Activated CD4-positive, alpha-beta memory T cell treated with anti-CD3 and anti-CD28 coated beads for 36 hours (primary cell): ENCODE measurements at regions of chr11 and their contacts with region 1.

Region 1: GRCh38 chr11:117946842-117947526 is 17.8 kb upstream of the TMPRSS13 start:
- DNase-seq: peak; percentile 91
- H3K4me3 Mint-ChIP-seq: no peak overlapping the region
- H3K27ac Mint-ChIP-seq: peak overlapping the region; percentile 65
- H3K4me1 Mint-ChIP-seq: peaks cover 77% of the 10 kb centered on the region
- H3K27me3 Mint-ChIP-seq: no peaks in the 10 kb centered on the region

Region 2: GRCh38 chr11:117426269-117426685 is 520.7 kb before region 1 on chr11:
- CTCF ChIA-PET with region 1: interaction called, 10 read pairs
- POLR2A ChIA-PET with region 1: no interaction called
- intact Hi-C with region 1: no loop called
- DNase-seq: peak; percentile 80
- H3K4me3 Mint-ChIP-seq: no peak overlapping the region
- H3K27ac Mint-ChIP-seq: no peak overlapping the region
- H3K4me1 Mint-ChIP-seq: peaks cover 4% of the 10 kb centered on the region
- H3K27me3 Mint-ChIP-seq: no peaks in the 10 kb centered on the region

Region 3: DNA sequence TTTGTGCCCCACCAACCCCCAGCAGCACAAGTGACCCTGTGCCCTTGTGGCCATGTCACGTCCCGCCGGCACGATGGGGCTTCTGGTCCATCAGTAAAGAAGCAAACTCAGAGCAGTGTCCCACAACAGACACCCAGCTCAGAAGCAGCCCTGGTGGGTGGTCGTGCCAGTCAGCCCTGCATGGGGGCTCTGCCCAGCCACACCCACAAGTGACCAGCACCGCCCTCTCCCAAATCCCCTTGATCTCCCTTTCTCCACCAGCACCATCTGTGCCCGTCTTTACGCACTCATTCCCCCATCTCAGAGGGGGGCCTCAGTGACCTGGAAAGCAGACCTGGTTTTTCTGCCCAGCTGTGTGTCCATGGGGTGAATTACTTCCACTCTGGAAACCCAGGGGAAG is 299.1 kb before region 1 on chr11:
- CTCF ChIA-PET with region 1: no interaction called
- POLR2A ChIA-PET with region 1: no interaction called
- intact Hi-C with region 1: no loop called
- DNase-seq: no peak
- H3K4me3 Mint-ChIP-seq: no peak overlapping the region
- H3K27ac Mint-ChIP-seq: no peak overlapping the region
- H3K4me1 Mint-ChIP-seq: no peaks in the 10 kb centered on the region
- H3K27me3 Mint-ChIP-seq: peaks cover 4% of the 10 kb centered on the region

Region 4: DNA sequence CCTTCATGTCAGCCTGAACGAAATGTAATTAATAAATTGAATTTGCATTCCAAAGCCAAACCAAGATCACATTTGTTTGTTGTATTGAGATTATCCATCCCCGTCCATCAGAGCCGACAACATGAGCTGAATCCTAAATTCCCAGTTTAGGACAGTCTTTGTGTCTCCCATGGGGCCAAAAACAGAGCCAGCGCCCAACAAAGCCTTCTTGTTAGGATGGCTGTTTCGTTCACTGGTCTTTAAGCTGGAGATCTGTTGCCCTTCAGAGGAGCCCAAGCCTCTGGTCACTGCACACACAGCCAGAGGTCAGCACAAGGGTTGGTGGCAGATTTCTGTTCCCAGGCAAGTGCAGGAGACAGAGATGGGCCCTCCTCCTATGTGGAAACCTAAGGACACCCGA is 175.8 kb before region 1 on chr11:
- CTCF ChIA-PET with region 1: no interaction called
- POLR2A ChIA-PET with region 1: no interaction called
- intact Hi-C with region 1: no loop called
- DNase-seq: no peak
- H3K4me3 Mint-ChIP-seq: no peak overlapping the region
- H3K27ac Mint-ChIP-seq: no peak overlapping the region
- H3K4me1 Mint-ChIP-seq: no peaks in the 10 kb centered on the region
- H3K27me3 Mint-ChIP-seq: peaks cover 2% of the 10 kb centered on the region

Region 5: DNA sequence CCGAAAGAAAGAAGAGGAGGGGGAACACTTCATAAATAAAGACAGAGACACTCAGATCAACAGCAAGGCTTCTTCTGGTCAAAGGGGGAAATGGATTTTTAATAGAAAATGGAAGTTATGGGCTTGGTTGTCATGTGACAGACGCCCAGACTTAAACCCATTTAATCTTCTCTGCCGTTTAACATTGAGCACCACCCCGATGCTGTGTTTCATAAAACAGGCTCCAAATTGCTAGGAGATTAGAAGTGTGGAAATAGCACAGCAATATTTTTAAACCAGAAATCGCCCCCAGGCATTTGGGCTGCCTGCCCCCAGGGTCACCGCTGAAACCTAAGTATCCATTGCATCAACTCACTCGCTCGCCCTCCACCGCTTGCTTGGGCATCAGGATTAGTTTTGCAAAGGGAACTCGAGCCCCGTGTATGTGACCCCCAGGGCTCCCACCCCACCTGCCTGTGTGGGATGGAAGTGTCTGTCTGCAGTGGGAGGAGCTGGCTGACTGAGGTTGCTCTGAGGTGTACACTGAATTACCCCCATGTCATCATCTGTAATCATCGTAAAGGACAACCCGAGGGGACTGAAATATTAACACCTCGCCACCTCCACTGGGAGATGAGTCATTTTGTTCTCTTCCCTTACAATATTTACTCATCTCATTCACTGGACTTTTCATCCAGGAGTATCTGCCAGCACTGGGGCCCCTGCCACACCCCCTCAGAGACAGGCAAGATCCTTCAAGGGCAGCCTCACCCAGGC is 160.7 kb before region 1 on chr11:
- CTCF ChIA-PET with region 1: no interaction called
- POLR2A ChIA-PET with region 1: no interaction called
- intact Hi-C with region 1: no loop called
- DNase-seq: no peak
- H3K4me3 Mint-ChIP-seq: no peak overlapping the region
- H3K27ac Mint-ChIP-seq: no peak overlapping the region
- H3K4me1 Mint-ChIP-seq: no peaks in the 10 kb centered on the region
- H3K27me3 Mint-ChIP-seq: peaks cover 48% of the 10 kb centered on the region

Region 6: GRCh38 chr11:117828611-117829368 is 118.2 kb before region 1 on chr11:
- CTCF ChIA-PET with region 1: interaction called, 38 read pairs
- POLR2A ChIA-PET with region 1: interaction called, 3 read pairs
- intact Hi-C with region 1: loop called (anchors 2 kb)
- DNase-seq: peak; percentile 91
- H3K4me3 Mint-ChIP-seq: no peak overlapping the region
- H3K27ac Mint-ChIP-seq: peak overlapping the region; percentile 28
- H3K4me1 Mint-ChIP-seq: peaks cover 45% of the 10 kb centered on the region
- H3K27me3 Mint-ChIP-seq: no peaks in the 10 kb centered on the region

Region 7: DNA sequence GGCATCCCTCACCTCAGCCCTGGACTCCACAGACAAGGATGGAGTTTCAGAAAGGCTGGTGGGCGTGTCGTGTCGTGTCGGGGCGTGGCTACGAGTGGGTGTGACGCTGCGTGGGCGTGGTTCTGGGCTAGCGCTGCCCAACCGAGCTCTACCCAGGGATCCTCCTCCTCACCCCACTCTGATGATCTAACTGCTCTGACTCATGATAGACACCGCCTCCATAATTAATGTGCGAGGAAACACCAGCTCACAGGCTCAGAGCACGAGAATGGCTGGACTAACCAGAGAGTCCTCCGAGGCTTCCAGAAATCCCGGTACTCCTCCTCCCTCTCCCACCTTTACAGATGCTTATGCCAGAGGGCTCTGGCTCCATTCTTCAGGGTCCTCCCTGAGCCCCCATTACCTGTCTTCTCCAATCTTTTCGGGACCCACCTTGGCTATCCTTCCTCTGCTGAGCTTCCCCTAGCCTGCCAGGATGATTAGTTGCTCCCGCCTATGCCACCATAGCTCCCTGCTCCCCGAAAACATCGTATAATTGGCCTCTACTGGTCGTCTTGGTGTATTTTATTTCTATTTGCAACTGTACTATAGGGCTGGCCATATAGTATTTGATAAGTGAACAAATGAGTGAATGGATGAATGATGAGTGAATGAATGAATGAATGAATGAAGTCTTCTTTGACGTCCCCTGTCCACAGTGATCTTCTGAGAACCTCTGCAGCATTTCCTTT is 39.6 kb before region 1 on chr11:
- CTCF ChIA-PET with region 1: interaction called, 10 read pairs
- POLR2A ChIA-PET with region 1: interaction called, 3 read pairs
- intact Hi-C with region 1: loop called (anchors 2 kb)
- DNase-seq: peak; percentile 87
- H3K4me3 Mint-ChIP-seq: peak overlapping the region; percentile 45
- H3K27ac Mint-ChIP-seq: peak overlapping the region; percentile 8
- H3K4me1 Mint-ChIP-seq: peaks cover 13% of the 10 kb centered on the region
- H3K27me3 Mint-ChIP-seq: no peaks in the 10 kb centered on the region

Region 8: GRCh38 chr11:117959438-117960149 is 12.6 kb after region 1 on chr11:
- CTCF ChIA-PET with region 1: interaction called, 27 read pairs
- POLR2A ChIA-PET with region 1: interaction called, 7 read pairs
- intact Hi-C with region 1: no loop called
- DNase-seq: no peak
- H3K4me3 Mint-ChIP-seq: no peak overlapping the region
- H3K27ac Mint-ChIP-seq: peak overlapping the region; percentile 78
- H3K4me1 Mint-ChIP-seq: peaks cover 32% of the 10 kb centered on the region
- H3K27me3 Mint-ChIP-seq: no peaks in the 10 kb centered on the region

Region 9: DNA sequence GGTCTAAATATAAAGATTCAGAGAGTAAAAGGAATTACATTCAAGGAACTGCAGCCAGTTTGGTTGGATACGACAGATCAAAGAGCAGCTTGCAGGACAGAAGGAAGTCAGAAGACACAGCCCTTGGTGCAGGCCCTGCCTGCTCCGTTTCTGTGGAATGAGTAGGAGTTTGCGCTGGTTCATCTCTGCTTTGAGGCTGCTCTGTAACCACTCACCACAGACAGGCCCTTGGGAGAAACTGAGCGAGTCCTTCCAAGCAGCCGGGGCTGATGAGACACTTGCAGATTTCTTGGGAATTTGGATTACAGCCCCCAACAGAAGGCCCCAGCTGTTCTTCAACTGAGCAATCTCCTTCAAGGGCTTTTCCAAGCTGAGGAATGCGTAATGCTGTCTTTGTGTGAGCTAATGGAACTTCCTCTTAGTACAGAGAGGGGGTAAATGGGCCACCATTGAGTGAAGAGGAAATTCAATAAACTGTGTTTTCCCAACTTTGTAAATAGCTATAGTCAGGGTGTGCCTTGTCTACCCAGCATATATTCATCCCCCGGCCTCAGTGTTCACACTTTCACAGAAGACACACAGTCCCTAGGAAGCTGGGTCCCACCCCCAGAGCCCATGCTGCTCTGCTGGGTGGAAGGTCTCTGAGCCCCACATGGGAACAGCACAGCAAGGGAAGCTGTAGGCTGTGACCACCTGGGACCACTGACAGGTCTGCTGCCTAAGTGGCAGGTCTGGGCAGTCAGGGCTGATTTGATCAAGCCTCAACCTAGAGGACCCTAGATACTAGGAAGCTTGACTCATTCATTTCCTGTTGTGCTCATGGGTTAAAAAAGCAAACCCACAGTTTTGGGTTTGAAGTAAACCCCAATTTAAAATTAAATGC is 55.8 kb after region 1 on chr11:
- CTCF ChIA-PET with region 1: interaction called, 19 read pairs
- POLR2A ChIA-PET with region 1: interaction called, 27 read pairs
- intact Hi-C with region 1: loop called (anchors 1 kb)
- DNase-seq: peak; percentile 90
- H3K4me3 Mint-ChIP-seq: peak overlapping the region; percentile 56
- H3K27ac Mint-ChIP-seq: peak overlapping the region; percentile 99
- H3K4me1 Mint-ChIP-seq: peaks cover 100% of the 10 kb centered on the region
- H3K27me3 Mint-ChIP-seq: no peaks in the 10 kb centered on the region